ENCODE measurements at regions of chr21 and their contacts with region 1.

Region 1: GRCh38 chr21:28537371-28538079 is 455.2 kb downstream of the LTN1 start:
- DNase-seq: peak; percentile 100
- ATAC-seq: peak; percentile 48
- H3K4me3 ChIP-seq: no peak overlapping the region
- H3K27ac ChIP-seq: peak overlapping the region; percentile 76; the same call in 1 of the 2 replicates
- H3K4me1 ChIP-seq: peaks cover 17% of the 10 kb centered on the region
- H3K27me3 ChIP-seq: no peaks in the 10 kb centered on the region
- CTCF ChIP-seq: no peak
- POLR2A ChIP-seq: no peak
- RAD21 ChIP-seq: peak; percentile 12; the same call in 1 of the 2 replicates

Region 2: DNA sequence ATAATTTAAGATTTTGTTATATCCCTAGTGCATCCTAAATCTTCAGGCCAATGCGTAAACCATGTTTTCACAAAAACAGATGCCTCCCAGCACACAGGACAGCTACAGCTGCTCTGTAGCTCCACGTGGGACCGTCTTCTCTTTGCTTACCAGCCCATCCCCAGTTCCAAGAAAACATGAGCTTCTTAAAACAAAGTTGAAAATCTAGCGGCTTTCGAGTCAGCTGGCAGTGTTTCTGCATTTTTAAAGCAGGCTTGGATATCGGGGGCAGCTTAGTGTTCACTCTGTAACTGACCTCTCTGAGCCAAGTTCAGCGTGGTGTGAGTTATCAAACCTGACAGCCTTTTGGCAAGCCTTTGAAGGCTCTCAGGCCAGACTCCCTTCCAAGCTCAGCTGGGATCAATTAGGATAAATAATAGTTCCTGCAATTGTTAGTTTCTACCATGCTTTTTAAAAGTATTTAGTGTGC is 426.3 kb before region 1 on chr21:
- CTCF ChIA-PET with region 1: no interaction called
- POLR2A ChIA-PET with region 1: no interaction called
- dilution Hi-C with region 1: no loop called
- in situ Hi-C with region 1: no loop called
- intact Hi-C with region 1: loop called (anchors 1 kb)
- DNase-seq: peak; percentile 92
- ATAC-seq: peak; percentile 96
- H3K4me3 ChIP-seq: peak overlapping the region; percentile 2; the same call in 1 of the 2 replicates
- H3K27ac ChIP-seq: peak overlapping the region; percentile 92
- H3K4me1 ChIP-seq: peaks cover 4% of the 10 kb centered on the region; the same call in 1 of the 2 replicates
- H3K27me3 ChIP-seq: no peaks in the 10 kb centered on the region
- CTCF ChIP-seq: no peak
- POLR2A ChIP-seq: no peak
- RAD21 ChIP-seq: no peak

Region 3: DNA sequence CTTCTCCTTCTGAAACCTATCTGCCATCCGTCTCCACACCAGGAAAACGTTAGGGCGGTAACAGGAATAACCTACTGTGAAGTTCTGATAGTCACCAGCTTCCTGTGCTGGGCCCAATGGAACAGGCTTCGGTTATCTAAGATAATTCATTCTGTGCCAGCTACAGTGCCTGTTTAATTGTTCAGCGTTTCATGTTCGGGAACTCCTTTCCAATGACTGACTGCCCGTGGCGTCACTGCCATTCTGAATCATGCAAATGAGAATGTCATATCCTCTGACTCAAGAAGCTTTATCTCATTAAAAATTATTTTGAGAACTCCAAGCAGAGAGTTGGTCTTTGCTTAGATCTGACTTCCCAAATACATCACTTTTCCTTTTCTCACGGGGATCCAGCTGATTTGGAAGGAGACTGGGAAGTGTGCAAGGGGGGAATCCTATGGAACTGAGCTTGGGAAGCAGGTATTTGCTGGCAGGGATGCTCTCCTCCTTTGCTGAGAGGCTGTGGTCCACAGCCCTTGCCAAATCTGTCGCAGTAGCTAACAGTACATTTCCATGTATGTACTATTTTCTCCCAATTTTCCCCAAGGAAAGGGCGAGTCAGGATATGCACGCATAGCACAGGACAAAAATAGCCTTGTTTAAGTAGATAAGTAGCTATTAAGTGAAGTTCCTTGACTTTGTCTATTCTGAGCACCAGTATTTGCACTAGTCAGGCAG is 96.5 kb after region 1 on chr21:
- CTCF ChIA-PET with region 1: no interaction called
- POLR2A ChIA-PET with region 1: no interaction called
- dilution Hi-C with region 1: no loop called
- in situ Hi-C with region 1: no loop called
- intact Hi-C with region 1: loop called (anchors 10 kb)
- DNase-seq: peak; percentile 95
- ATAC-seq: peak; percentile 23
- H3K4me3 ChIP-seq: no peak overlapping the region; the same call in 1 of the 2 replicates
- H3K27ac ChIP-seq: peak overlapping the region; percentile 75
- H3K4me1 ChIP-seq: peaks cover 21% of the 10 kb centered on the region
- H3K27me3 ChIP-seq: no peaks in the 10 kb centered on the region
- CTCF ChIP-seq: no peak
- POLR2A ChIP-seq: no peak
- RAD21 ChIP-seq: 0 out of 2 replicates have a peak, but pooled peaks have one; percentile 6

Region 4: GRCh38 chr21:28657566-28657965 is 120.0 kb after region 1 on chr21:
- CTCF ChIA-PET with region 1: no interaction called
- POLR2A ChIA-PET with region 1: no interaction called
- dilution Hi-C with region 1: no loop called
- in situ Hi-C with region 1: no loop called
- intact Hi-C with region 1: no loop called
- DNase-seq: no peak
- ATAC-seq: no peak
- H3K4me3 ChIP-seq: no peak overlapping the region
- H3K27ac ChIP-seq: no peak overlapping the region
- H3K4me1 ChIP-seq: no peaks in the 10 kb centered on the region
- H3K27me3 ChIP-seq: no peaks in the 10 kb centered on the region
- CTCF ChIP-seq: no peak
- POLR2A ChIP-seq: no peak
- RAD21 ChIP-seq: no peak